GM13977 (cell line): ENCODE measurements at regions of chr16 and their contacts with region 1.

Region 1: DNA sequence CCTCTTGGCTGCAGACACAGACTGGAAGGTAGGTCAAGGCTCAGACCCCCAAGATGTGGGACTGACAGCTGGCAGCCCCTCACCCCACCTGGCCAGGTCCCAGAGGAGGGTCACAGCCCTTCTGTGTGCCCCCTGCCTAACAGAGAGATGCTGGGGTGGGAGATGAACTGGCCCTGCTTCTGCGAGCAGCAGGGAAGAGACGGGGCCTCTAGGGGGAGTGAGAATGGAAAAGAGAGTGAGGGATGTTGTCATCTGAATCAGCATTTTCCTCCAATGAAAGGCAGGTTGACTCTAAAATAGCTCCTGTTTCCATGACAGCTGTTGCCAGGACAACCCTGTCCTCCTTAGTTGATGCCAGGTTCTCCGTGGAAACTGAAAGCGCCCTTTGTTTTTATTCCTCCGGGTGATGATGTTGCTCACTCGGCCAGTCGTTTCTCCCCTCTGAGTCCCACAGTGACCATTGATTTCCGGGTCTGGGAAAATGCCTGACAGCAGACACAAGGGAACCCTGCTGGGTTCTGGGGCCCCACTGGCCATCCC is 4.9 kb upstream of the NDRG4 start:
- DNase-seq: peak; percentile 92
- CTCF ChIP-seq: peak; percentile 49

Region 2: DNA sequence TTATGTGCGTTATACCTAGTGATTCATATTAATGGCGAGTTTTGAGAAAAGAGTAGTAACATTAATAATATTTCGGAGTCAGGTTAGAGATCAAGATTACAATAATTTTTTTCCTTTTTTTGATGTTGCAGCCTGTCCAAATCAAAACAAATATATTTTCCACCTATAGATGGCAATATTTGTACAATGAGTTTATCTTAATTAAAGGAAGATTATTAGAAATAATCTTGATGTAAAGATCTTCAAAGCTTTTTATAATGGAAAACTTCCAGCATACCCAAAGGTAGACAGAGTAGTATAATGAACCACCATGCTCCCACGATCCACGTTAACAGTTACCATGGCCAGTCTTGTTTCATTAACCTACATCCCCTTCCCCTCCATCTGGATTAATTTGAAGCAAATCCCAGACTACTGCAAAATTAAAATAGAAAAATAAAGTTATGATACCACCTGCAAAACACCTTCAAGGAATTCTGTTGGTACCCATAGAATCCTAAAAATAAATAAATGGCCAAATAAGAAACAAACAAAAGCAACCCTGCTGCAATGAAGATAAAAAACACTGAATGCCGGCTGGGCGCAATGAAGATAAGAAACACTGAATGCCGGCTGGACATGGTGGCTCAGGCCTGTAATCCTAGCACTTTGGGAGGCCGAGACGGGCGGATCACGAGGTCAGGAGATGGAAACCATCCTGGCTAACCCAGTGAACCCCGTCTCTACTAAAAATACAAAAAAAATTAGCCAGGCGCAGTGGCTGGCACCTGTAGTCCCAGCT is 149.3 kb before region 1 on chr16:
- in situ Hi-C with region 1: loop called (anchors 10 kb)
- DNase-seq: no peak
- CTCF ChIP-seq: peak; percentile 21

Region 3: DNA sequence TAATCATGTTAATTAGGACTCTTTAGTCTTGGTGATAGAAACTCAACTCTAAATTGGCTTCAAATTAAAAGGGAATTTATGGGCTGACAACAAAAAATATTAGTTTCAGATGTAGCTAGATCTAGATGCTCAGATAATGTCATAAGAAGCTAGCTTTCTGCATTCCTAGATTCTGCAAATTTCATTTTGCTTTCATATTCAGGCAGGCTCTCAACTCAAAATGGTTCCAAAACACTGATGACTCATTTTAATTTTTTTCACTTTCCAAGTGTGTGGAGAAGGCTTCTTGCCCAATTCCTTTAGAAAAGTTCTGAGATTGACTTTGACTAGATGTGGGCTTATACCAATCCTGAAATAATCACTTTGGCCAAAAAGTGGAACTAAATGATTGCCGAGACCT is 475.7 kb after region 1 on chr16:
- in situ Hi-C with region 1: no loop called
- DNase-seq: no peak
- CTCF ChIP-seq: no peak